Activated T-helper 2 cell treated with anti-CD3 and anti-CD28 coated beads, Interferon-gamma antibody, Interleukin-2, Interleukin-4, amounts not matched to agents 10 μg/mL and 5 μg/mL and 100 μg/mL, durations not matched to agents 14 hours and 24 hours and 36 hours (primary cell): ENCODE measurements at regions of chr15 and their contacts with region 1.

Region 1: GRCh38 chr15:60044636-60045270 is 40.6 kb downstream of the FOXB1 start:
- DNase-seq: peak; percentile 33
- H3K4me3 Mint-ChIP-seq: peak overlapping the region; percentile 13
- H3K27ac Mint-ChIP-seq: peak overlapping the region; percentile 77
- H3K4me1 Mint-ChIP-seq: peaks cover 24% of the 10 kb centered on the region
- H3K27me3 Mint-ChIP-seq: no peaks in the 10 kb centered on the region

Region 2: GRCh38 chr15:59668556-59668955 is 376.2 kb before region 1 on chr15:
- intact Hi-C with region 1: no loop called
- DNase-seq: no peak
- H3K4me3 Mint-ChIP-seq: no peak overlapping the region
- H3K27ac Mint-ChIP-seq: no peak overlapping the region
- H3K4me1 Mint-ChIP-seq: peaks cover 2% of the 10 kb centered on the region
- H3K27me3 Mint-ChIP-seq: no peaks in the 10 kb centered on the region

Region 3: DNA sequence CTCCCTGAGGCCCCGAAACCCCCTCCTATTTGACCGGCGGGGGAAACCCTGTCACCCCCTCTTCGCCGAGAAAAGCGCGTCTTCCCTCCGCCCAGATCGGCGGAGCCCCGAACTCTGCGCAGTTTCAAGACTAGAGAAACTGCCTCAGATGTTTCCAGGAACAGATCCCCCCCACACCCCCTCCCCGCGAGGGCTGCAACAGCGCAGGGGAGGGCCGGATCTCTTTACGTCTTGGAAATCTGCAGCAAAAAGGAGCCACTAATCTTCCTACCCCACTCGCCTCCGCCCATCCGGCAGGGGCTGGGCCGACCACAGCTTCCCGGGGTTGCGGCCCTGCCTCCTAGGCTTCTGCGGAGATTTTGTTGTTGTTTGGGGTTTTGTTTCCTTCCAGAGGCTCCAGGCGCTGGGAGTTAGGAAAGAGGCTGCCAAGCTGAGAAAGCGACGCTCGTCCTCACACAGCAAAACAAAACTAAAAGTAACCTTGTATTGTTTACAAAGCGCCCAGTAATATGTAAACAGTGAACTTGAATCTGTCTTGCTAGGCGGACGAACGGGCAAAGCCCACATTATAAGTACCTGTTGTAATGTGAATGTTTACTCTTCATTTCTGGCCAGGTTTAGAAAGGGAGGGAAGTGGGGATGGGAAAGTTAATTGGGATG is 38.4 kb before region 1 on chr15:
- intact Hi-C with region 1: loop called (anchors 1 kb)
- DNase-seq: peak; percentile 84
- H3K4me3 Mint-ChIP-seq: peak overlapping the region; percentile 95
- H3K27ac Mint-ChIP-seq: peak overlapping the region; percentile 94
- H3K4me1 Mint-ChIP-seq: peaks cover 47% of the 10 kb centered on the region
- H3K27me3 Mint-ChIP-seq: peaks cover 65% of the 10 kb centered on the region

Region 4: GRCh38 chr15:60017538-60018520 is 26.9 kb before region 1 on chr15:
- intact Hi-C with region 1: loop called (anchors 1 kb)
- DNase-seq: no peak
- H3K4me3 Mint-ChIP-seq: no peak overlapping the region
- H3K27ac Mint-ChIP-seq: peak overlapping the region; percentile 68
- H3K4me1 Mint-ChIP-seq: peaks cover 40% of the 10 kb centered on the region
- H3K27me3 Mint-ChIP-seq: peaks cover 14% of the 10 kb centered on the region

Region 5: GRCh38 chr15:60091165-60091564 is 46.4 kb after region 1 on chr15:
- intact Hi-C with region 1: no loop called
- DNase-seq: no peak
- H3K4me3 Mint-ChIP-seq: no peak overlapping the region
- H3K27ac Mint-ChIP-seq: no peak overlapping the region
- H3K4me1 Mint-ChIP-seq: peaks cover 5% of the 10 kb centered on the region
- H3K27me3 Mint-ChIP-seq: peaks cover 9% of the 10 kb centered on the region

Region 6: DNA sequence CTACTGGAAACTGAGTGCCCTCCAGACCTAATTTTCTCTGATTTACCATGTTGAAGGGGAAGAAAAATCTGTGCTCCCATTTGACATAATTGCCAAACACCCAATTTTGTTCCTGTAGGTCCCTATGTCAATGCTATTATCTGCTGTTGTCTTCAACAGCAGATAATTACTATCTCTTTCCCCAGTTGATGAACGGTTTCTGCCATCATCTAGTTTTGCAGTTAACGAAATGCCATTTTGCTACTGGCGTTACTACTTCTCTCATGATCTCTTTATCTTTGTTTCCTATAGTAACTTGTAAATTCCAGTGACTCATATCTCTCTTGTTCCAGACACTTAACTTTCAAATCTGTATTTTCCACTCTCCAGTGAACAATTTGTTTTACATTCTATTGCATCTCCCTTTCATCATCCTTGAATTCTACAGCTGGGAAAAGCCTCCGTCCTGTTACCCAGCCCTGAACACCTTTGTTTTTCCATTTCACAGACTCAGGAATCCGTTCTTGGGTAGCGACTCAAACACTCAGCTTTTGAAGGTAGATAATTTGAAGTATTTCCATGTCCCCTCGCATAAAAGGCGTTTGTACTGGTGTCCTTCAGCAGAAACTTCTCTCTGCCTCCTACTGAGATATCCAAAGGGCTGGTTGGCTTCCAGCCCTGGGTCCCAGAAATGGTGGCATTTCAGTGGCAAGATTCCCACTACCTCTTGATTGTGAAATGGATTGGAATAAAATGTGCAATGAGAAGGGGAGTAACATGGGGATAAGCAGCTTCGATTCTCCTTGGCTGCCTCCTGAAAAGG is 71.0 kb after region 1 on chr15:
- intact Hi-C with region 1: loop called (anchors 2 kb)
- DNase-seq: no peak
- H3K4me3 Mint-ChIP-seq: no peak overlapping the region
- H3K27ac Mint-ChIP-seq: peak overlapping the region; percentile 83
- H3K4me1 Mint-ChIP-seq: peaks cover 53% of the 10 kb centered on the region
- H3K27me3 Mint-ChIP-seq: no peaks in the 10 kb centered on the region

Region 7: GRCh38 chr15:60128000-60128376 is 83.2 kb after region 1 on chr15:
- intact Hi-C with region 1: loop called (anchors 1 kb)
- DNase-seq: no peak
- H3K4me3 Mint-ChIP-seq: peak overlapping the region; percentile 71
- H3K27ac Mint-ChIP-seq: peak overlapping the region; percentile 86
- H3K4me1 Mint-ChIP-seq: peaks cover 53% of the 10 kb centered on the region
- H3K27me3 Mint-ChIP-seq: peaks cover 9% of the 10 kb centered on the region

Region 8: DNA sequence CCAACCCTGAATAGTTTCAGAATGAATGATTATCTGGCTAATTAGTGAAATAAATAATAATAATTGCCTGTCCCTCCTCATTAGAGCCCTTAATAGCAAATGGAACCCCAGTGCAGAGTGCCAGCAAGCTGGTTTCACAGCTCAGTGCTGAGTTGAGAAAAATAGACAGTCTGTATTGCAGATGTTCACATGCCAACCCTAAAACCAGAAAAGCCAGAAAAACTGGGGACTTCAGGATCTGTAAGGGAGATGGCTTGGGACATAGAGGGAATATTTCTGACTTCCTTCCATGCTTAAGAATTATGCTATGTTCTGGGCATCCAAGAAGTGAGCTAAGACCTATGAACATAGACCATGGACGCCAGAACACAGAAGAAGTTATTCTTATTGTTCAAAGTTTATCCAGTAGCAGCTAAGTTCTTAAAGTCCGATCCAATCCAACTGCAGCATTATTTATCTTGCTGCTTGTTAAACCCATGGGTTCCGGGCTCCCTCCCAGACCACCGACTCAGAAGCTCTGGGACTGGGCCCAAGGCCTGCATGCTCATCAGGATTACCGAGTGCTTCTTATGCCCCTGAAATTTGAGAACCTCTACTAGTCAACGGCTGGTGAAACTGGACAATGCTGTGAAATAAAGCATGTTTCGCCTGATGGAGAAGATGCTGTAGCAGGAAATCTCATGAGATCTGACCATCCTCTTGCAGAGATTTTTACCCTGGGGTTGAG is 117.7 kb after region 1 on chr15:
- intact Hi-C with region 1: no loop called
- DNase-seq: no peak
- H3K4me3 Mint-ChIP-seq: no peak overlapping the region
- H3K27ac Mint-ChIP-seq: no peak overlapping the region
- H3K4me1 Mint-ChIP-seq: no peaks in the 10 kb centered on the region
- H3K27me3 Mint-ChIP-seq: peaks cover 21% of the 10 kb centered on the region